Mammary epithelial cell (primary cell): ENCODE measurements at regions of chr19 and their contacts with region 1.

Region 1: GRCh38 chr19:19597809-19598306 is 20.6 kb downstream of the PBX4 start:
- DNase-seq: no peak
- H3K4me3 ChIP-seq: no peak overlapping the region
- H3K27ac ChIP-seq: no peak overlapping the region
- H3K4me1 ChIP-seq: peaks cover 8% of the 10 kb centered on the region
- H3K27me3 ChIP-seq: no peaks in the 10 kb centered on the region
- CTCF ChIP-seq: no peak

Region 2: DNA sequence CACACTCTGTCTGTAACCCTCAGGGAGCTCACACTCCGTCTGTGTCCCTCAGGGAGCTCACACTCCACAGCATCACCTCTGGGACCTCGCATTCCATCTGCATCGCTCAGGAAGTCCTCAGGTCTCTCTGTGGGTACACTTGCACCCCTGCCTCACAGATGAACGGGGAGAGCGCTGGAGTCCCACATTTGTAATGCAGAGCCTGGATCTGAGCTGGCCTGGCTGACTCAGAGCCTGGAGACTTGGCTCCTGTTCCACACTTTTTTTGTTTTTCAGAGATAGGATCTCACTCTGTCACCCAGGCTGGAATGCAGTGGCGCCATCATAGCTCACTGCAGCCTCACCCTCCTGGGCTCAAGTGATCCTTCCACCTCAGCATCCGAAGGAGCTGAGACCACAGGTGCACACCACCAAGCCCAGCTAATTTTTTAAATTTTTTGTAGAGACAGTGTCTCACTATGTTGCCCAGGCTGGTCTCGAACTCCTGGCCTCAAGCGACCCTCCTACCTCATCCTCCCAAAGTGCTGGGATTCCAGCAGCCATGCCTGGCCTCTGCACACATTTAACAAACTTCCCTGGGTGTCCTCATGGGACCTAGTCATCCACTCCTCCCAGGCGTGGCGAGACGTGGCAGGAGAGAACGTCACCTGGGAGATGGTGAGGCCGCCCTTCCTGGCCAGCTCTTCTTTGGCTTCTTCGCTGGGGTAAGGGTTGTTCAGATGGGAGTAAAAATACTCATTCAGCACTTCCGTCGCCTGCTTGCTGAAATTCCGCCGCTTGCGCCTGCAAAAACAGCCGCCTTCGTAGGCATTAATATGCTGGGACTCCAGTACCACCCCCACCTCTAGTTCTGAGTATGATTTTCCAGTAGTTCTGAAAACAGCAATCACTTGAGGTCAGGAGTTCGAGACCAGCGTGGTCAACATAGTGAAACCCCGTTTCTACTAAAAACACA is 28.8 kb before region 1 on chr19:
- CTCF ChIA-PET with region 1: interaction called, 19 read pairs
- dilution Hi-C with region 1: no loop called
- in situ Hi-C with region 1: no loop called
- intact Hi-C with region 1: no loop called
- DNase-seq: peak; percentile 34
- H3K4me3 ChIP-seq: no peak overlapping the region
- H3K27ac ChIP-seq: no peak overlapping the region
- H3K4me1 ChIP-seq: no peaks in the 10 kb centered on the region
- H3K27me3 ChIP-seq: no peaks in the 10 kb centered on the region
- CTCF ChIP-seq: no peak